ENCODE measurements at regions of chr2 and their contacts with region 1.

Region 1: GRCh38 chr2:219155054-219155644 is 5.5 kb downstream of the NHEJ1 start:
- DNase-seq: peak in 22 of 42 donors; percentile 14 to 78 (median 44)

Region 2: DNA sequence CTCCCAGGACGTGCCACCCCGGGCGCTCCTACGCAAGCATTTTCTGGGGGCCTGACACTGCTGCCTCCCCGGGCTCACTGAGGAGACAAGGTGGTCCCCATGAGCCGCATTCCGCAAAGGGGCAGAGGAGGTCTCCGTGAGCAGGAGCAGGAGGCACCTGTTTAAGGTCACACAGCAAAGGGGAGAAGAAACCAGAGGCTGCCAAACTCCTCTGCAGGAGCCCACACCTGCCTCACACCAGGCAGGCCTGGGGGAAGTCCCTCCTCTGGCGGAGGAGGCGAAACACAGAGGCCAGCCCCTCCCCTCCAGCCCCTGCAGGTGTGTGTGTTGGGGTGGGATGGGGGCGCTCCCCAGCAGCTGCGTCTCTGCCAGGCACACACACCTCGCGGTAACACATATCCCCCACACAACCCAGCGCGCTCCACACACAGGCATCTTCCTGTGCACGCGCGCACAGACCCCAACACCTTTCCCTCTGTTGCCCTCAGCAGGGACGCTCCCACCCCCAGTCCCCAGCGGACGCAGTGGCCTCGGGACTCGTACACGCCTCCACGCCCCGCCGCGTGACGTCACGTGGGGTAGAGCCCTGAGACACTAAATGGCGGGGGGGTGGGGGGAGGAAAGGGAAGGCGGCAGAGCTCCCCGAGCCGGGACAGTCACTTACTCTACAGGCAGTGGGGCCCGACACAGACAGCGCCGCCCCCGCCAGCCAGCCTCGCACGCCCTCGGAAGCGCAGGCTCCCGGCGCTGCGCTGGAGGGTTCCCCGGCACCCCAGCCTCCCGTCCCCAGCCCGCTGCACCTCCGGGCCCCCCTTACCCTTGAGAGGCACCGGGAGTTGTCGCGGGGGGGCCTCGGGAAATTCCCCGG is 275.0 kb before region 1 on chr2:
- intact Hi-C with region 1: loop called (anchors 10 kb)
- DNase-seq: peak in 21 of 42 donors; percentile 34 to 74 (median 58)

Region 3: GRCh38 chr2:218995972-218996711 is 159.0 kb before region 1 on chr2:
- intact Hi-C with region 1: loop called (anchors 5 kb)
- DNase-seq: peak; percentile 67 to 96 (median 88)

Region 4: GRCh38 chr2:219057709-219058540 is 97.2 kb before region 1 on chr2:
- intact Hi-C with region 1: loop called (anchors 5 kb)
- DNase-seq: peak; percentile 52 to 91 (median 80)

Region 5: GRCh38 chr2:219229305-219230058 is 74.3 kb after region 1 on chr2 and contains the starts of genes ANKZF1 and ATG9A:
- intact Hi-C with region 1: no loop called
- DNase-seq: peak; percentile 96 to 100 (median 99)

Measured in head of caudate nucleus (tissue), 42 donors.